Gastrocnemius medialis (tissue), 4 donors: ENCODE measurements at regions of chr3 and their contacts with region 1.

Region 1: GRCh38 chr3:103813957-103814356 is 1379.1 kb downstream of the ZPLD1 start:
- DNase-seq: no peak
- ATAC-seq: no peak
- H3K4me3 ChIP-seq: no peak overlapping the region
- H3K27ac ChIP-seq: no peak overlapping the region
- H3K4me1 ChIP-seq: no peaks in the 10 kb centered on the region
- H3K27me3 ChIP-seq: no peaks in the 10 kb centered on the region
- CTCF ChIP-seq: no peak
- POLR2A ChIP-seq: no peak

Region 2: GRCh38 chr3:103919327-103919726 is 105.4 kb after region 1 on chr3:
- in situ Hi-C with region 1: loop called in 1 of 4 experiments (anchors 25 kb)
- intact Hi-C with region 1: no loop called
- DNase-seq: no peak
- ATAC-seq: no peak
- H3K4me3 ChIP-seq: no peak overlapping the region
- H3K27ac ChIP-seq: no peak overlapping the region
- H3K4me1 ChIP-seq: no peaks in the 10 kb centered on the region
- H3K27me3 ChIP-seq: no peaks in the 10 kb centered on the region
- CTCF ChIP-seq: no peak
- POLR2A ChIP-seq: no peak